ENCODE measurements at regions of chr7 and their contacts with region 1.

Region 1: DNA sequence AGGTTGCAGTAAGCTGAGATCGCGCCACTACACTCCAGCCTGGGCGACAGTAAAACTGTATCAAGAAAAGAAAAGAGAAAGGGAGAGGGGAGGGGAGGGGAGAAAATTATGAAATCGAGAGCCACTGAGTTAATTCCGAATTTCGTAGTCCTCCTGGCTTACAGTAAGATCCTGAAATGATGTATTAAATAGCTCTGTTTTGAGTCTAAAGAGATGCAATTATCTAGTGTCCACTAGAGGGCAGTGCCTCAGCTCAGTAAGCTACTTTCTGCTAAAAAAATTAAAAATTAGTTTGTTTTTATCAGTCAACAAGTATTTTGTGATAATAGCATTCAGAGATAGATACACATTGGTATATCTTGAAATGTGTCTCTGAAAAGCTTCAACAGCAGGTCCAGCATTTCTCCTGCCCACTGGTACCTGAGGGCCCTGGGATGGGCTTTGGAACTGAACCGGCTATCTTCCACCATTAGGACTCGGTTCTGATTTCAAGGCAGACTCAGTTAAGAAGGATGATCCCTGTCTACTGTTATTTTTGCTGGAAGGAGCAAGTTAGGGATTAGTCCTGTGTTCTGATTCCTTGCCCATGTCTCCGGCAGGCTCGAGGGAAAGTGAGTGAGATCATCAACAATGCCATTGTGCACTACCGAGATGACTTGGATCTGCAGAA is 19.5 kb downstream of the TSPAN33 start:
- DNase-seq: peak; percentile 19
- H3K4me3 ChIP-seq: no peak overlapping the region
- H3K27me3 ChIP-seq: peaks cover 16% of the 10 kb centered on the region
- CTCF ChIP-seq: peak; percentile 83

Region 2: GRCh38 chr7:129150199-129150996 is 13.6 kb before region 1 on chr7:
- CTCF ChIA-PET with region 1: interaction called, 20 read pairs
- POLR2A ChIA-PET with region 1: no interaction called
- DNase-seq: no peak
- H3K4me3 ChIP-seq: no peak overlapping the region
- H3K27me3 ChIP-seq: peaks cover 33% of the 10 kb centered on the region
- CTCF ChIP-seq: no peak

Region 3: DNA sequence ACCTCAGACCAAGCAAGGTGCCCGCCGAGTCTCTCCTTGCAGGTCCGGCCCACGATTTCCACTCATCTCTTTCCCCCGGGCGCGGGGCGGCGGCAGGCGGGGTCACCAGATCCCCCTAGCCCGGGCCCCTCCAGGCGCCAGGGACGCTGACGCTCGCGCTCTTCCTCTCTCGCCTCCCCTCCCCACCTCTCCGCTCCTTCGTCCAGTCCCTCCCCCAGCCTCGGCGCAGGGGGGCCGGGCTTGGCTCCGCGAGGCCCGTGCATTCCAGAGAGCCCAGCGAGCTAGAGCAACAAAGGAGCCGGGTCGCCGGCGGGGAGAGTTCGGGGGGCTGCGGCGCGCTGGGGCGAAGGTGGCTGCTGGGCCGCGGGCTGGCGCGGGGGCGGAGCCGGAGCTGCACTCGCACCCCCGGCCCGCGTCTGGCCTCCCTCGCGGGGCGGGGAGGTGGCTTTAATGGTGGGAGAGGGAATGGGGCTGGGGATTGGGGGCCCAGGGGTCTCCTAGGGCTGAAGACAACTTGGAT is 24.4 kb after region 1 on chr7 and contains the start of gene SMO:
- CTCF ChIA-PET with region 1: interaction called, 11 read pairs
- POLR2A ChIA-PET with region 1: interaction called, 3 read pairs
- DNase-seq: no peak
- H3K4me3 ChIP-seq: peak within 1 kb of the TSS; percentile 61
- H3K27me3 ChIP-seq: peaks cover 2% of the 10 kb centered on the region; the same call in 1 of the 2 replicates
- CTCF ChIP-seq: no peak
- polyA plus RNA-seq, gene SMO: 7.6 and 10.8 TPM in 2 replicates

Region 4: DNA sequence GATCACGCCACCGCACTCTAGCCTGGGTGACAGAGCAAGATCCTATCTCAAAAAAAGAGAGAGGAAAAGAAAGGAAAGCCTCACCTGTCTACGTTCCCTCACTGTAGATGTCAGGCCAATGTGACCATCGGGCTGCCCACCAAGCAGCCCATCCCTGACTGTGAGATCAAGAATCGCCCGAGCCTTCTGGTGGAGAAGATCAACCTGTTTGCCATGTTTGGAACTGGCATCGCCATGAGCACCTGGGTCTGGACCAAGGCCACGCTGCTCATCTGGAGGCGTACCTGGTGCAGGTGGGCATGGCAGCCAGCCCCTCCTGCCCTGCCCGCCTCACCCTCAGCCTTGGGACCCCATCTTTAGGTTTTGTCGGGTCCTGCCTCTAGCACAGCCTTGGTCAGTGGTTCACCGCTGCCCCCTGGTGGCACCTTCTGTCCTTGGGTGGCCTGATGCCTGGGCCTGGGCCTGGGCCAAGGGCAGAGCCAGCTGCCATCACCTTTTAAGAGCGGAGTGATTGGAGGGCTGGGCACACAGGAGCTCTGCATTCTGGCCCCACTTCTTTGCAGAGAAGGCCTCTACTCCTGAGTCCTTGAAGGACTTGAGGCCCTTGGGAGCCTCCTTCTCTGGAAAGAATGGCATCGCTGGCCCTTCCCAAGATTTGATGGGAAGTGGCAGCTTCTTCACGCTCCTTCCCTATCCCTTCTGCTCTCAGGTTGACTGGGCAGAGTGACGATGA is 46.4 kb after region 1 on chr7:
- CTCF ChIA-PET with region 1: interaction called, 186 read pairs
- POLR2A ChIA-PET with region 1: no interaction called
- DNase-seq: no peak
- H3K4me3 ChIP-seq: no peak overlapping the region
- H3K27me3 ChIP-seq: no peaks in the 10 kb centered on the region
- CTCF ChIP-seq: peak; percentile 87

Region 5: DNA sequence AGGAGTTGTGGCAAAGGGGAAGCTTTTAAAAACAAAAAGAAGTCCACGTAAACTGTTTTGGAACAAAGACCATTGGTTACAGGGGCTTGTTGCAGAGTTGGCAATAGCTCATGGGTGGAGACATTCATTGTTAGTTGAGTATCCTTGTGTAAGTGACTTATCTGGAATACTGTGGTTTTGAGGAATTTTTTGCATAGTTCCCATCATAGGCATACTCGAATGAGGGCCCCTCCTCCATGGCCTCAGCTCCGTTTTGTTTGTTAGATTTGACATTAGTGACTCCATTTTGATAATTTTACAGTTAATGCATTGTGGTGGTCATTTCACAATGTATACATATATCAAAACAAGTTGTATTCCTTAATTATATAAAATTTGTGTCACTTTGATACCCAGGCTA is 325.5 kb after region 1 on chr7:
- CTCF ChIA-PET with region 1: no interaction called
- POLR2A ChIA-PET with region 1: no interaction called
- DNase-seq: peak; percentile 39
- H3K4me3 ChIP-seq: no peak overlapping the region
- H3K27me3 ChIP-seq: no peaks in the 10 kb centered on the region
- CTCF ChIP-seq: no peak

Region 6: DNA sequence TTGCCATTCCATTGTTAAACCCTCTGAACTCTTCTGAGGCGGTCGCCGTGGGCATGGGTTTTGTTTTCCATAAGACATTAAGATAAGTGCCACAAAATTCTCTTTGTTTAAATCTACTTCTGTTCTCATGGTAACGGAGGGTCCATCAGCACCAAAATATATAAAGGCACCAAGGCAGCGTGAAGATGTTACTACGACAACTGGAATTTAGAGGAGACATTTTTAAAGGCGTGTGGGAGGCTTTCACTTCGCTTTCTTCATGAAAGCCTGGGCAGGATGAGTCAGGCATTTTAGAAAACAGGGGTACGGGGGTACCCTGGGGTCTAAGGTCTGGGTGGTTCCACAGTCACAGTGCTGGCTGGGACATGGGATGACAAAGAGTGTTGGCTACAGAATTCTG is 372.3 kb after region 1 on chr7:
- CTCF ChIA-PET with region 1: no interaction called
- POLR2A ChIA-PET with region 1: no interaction called
- DNase-seq: no peak
- H3K4me3 ChIP-seq: no peak overlapping the region
- H3K27me3 ChIP-seq: no peaks in the 10 kb centered on the region; the same call in none of the 2 replicates
- CTCF ChIP-seq: no peak

Measured in BJ (cell line).